Activated naive CD8-positive, alpha-beta T cell treated with anti-CD3 and anti-CD28 coated beads, Interleukin-2, amount 10 ng/mL, durations not matched to agents 7 days and 5 days (primary cell): ENCODE measurements at regions of chr7 and their contacts with region 1.

Region 1: DNA sequence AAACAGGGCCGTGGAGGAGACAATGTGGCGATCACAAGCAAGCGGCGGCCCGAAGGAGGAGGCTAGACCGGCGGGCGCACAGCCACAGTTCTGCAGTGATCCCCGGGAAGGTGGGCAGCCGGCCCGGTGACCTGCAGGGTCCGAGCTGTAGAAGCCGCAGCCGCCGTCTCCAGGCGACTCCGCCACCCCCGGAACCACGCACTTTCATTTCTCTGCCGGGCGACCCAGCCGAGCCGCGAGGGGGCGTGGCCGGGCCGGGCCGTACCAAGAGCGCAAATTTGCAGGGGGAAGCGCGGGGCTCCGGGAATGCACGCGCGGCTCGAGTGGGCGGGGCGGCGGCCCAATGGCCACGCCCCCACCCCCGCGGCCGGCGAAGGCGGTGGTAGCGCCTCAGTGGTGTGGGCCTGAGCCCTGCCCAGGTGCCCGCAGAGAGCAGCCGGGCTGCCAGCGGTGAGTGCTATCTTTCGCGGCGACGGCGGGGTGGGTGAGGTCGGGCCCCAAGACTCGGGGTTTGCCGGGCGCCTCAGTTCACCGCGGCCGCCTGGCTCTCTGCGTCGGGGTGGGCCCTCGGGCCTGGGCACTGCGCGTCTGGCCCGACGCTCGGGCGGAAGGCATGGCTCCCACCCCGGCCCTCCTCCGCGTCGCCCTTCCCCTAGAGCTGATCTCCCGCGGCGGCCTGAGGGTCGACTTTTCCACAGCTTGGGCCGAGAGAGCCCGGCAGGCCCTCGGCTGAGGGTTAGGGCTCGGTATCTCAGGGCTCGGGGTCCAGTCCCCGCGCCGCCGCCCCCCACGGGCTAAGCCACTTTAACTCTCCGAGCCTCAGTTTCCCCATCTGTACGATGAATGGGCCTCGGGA is at the start of gene POR:
- DNase-seq: peak; percentile 100
- ATAC-seq: peak; percentile 94
- H3K4me3 Mint-ChIP-seq: peak within 1 kb of the TSS; percentile 90
- H3K27ac Mint-ChIP-seq: peak within 1 kb of the TSS; percentile 93
- H3K4me1 Mint-ChIP-seq: peaks cover 22% of the 10 kb centered on the region
- H3K27me3 Mint-ChIP-seq: peaks cover 4% of the 10 kb centered on the region
- total RNA-seq, gene POR: 61.5 to 62.2 TPM

Region 2: GRCh38 chr7:75878769-75879611 is 36.0 kb before region 1 on chr7 and contains the start of gene RHBDD2:
- POLR2A ChIA-PET with region 1: interaction called, 16 read pairs
- DNase-seq: peak; percentile 91
- ATAC-seq: peak; percentile 91
- H3K4me3 Mint-ChIP-seq: peak within 1 kb of the TSS; percentile 98
- H3K27ac Mint-ChIP-seq: peak within 1 kb of the TSS; percentile 85
- H3K4me1 Mint-ChIP-seq: peaks cover 19% of the 10 kb centered on the region
- H3K27me3 Mint-ChIP-seq: no peaks in the 10 kb centered on the region
- total RNA-seq, gene RHBDD2: 32.2 to 33.1 TPM

Region 3: DNA sequence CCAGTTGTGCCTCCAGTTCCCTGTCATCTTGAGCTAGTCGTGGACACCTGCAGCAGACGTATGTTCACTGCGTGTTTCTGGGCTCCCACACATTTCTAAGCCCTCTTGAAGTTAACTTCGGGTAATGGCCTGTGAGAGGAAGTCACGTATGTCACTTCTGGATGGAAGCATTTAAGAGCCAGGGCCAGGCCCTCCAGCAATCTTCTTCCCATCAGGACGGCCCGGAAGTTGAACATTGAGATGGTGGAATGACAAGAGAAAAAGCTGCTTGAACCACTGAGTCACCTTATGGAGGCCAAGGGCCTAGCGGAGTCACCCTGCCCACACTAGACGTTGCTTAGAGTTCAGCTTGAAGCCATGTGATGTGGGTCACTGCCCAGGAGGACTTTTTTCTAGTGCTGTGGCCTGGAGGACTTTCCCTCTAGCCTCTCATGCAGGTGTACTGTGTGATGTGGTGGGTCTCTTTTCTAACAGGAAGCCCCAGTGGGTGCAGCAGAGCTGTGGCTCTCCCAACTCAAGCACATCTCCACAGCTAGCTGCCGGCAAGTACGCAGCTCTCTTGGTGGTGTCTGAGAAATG is 13.5 kb after region 1 on chr7:
- POLR2A ChIA-PET with region 1: interaction called, 18 read pairs
- DNase-seq: peak; percentile 51
- ATAC-seq: peak; percentile 96
- H3K4me3 Mint-ChIP-seq: peak overlapping the region; percentile 45
- H3K27ac Mint-ChIP-seq: peak overlapping the region; percentile 67
- H3K4me1 Mint-ChIP-seq: peaks cover 14% of the 10 kb centered on the region
- H3K27me3 Mint-ChIP-seq: no peaks in the 10 kb centered on the region